ENCODE measurements at regions of chr16 and their contacts with region 1.

Region 1: GRCh38 chr16:9165681-9166080 is 74.2 kb downstream of the HAPSTR1 start:
- DNase-seq: no peak
- H3K4me3 ChIP-seq: no peak overlapping the region
- H3K27ac ChIP-seq: no peak overlapping the region
- H3K4me1 ChIP-seq: no peaks in the 10 kb centered on the region
- H3K27me3 ChIP-seq: no peaks in the 10 kb centered on the region
- CTCF ChIP-seq: no peak
- POLR2A ChIP-seq: no peak

Region 2: GRCh38 chr16:8788578-8789172 is 377.0 kb before region 1 on chr16:
- intact Hi-C with region 1: no loop called
- DNase-seq: no peak
- H3K4me3 ChIP-seq: no peak overlapping the region
- H3K27ac ChIP-seq: no peak overlapping the region
- H3K4me1 ChIP-seq: no peaks in the 10 kb centered on the region
- H3K27me3 ChIP-seq: no peaks in the 10 kb centered on the region
- CTCF ChIP-seq: no peak
- POLR2A ChIP-seq: no peak

Region 3: GRCh38 chr16:9206156-9206555 is 40.5 kb after region 1 on chr16:
- intact Hi-C with region 1: loop called (anchors 2 kb)
- DNase-seq: no peak
- H3K4me3 ChIP-seq: no peak overlapping the region
- H3K27ac ChIP-seq: no peak overlapping the region
- H3K4me1 ChIP-seq: no peaks in the 10 kb centered on the region
- H3K27me3 ChIP-seq: no peaks in the 10 kb centered on the region
- CTCF ChIP-seq: no peak
- POLR2A ChIP-seq: no peak

Measured in breast epithelium (tissue), 4 donors.